ENCODE measurements at regions of chr6 and their contacts with region 1.

Region 1: GRCh38 chr6:42879372-42880239 is at the start of gene RPL7L1:
- DNase-seq: peak; percentile 86
- H3K4me3 Mint-ChIP-seq: peak within 1 kb of the TSS; percentile 94
- H3K27ac Mint-ChIP-seq: peak within 1 kb of the TSS; percentile 92
- H3K4me1 Mint-ChIP-seq: peaks cover 31% of the 10 kb centered on the region
- H3K27me3 Mint-ChIP-seq: no peaks in the 10 kb centered on the region
- total RNA-seq, gene RPL7L1: 71.4 to 74.2 TPM

Region 2: GRCh38 chr6:42661540-42662153 is 218.0 kb before region 1 on chr6:
- CTCF ChIA-PET with region 1: interaction called, 15 read pairs
- POLR2A ChIA-PET with region 1: interaction called, 6 read pairs
- DNase-seq: peak; percentile 86
- H3K4me3 Mint-ChIP-seq: no peak overlapping the region
- H3K27ac Mint-ChIP-seq: no peak overlapping the region
- H3K4me1 Mint-ChIP-seq: peaks cover 1% of the 10 kb centered on the region
- H3K27me3 Mint-ChIP-seq: no peaks in the 10 kb centered on the region

Region 3: DNA sequence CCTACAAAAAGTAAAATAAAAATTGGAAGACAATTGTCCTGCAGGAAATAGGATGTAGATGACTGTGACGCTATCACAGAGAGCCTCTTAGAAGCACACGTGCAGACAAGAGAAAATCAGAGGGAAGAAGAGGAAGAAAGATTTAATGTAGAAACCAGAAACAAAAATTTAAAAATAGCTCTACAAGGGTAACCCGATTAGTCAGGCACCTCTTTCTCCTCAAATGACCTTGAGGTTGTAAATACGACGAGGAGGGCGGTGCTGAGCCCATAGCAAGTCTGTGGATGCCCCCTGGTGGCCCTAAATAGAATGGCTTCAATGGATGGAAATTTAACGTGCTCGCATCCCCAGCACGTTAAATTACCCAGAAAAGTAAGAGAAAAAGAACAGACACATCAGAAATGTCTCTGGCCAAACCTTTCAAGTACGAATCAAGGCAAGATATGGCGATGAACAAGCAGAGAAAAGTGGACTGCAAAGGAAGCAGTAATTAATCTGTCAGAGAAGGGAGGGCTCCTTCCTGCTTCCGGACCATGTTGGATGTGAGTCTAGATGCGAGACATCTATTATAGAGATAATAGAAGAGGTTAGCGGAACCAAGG is 153.0 kb before region 1 on chr6:
- CTCF ChIA-PET with region 1: interaction called, 21 read pairs
- POLR2A ChIA-PET with region 1: interaction called, 25 read pairs
- DNase-seq: peak; percentile 79
- H3K4me3 Mint-ChIP-seq: peak overlapping the region; percentile 77
- H3K27ac Mint-ChIP-seq: peak overlapping the region; percentile 91
- H3K4me1 Mint-ChIP-seq: peaks cover 22% of the 10 kb centered on the region
- H3K27me3 Mint-ChIP-seq: no peaks in the 10 kb centered on the region

Region 4: GRCh38 chr6:42782622-42783176 is 96.9 kb before region 1 on chr6:
- CTCF ChIA-PET with region 1: interaction called, 4 read pairs
- POLR2A ChIA-PET with region 1: interaction called, 48 read pairs
- DNase-seq: peak; percentile 64
- H3K4me3 Mint-ChIP-seq: peak overlapping the region; percentile 95
- H3K27ac Mint-ChIP-seq: peak overlapping the region; percentile 100
- H3K4me1 Mint-ChIP-seq: peaks cover 18% of the 10 kb centered on the region
- H3K27me3 Mint-ChIP-seq: no peaks in the 10 kb centered on the region

Region 5: DNA sequence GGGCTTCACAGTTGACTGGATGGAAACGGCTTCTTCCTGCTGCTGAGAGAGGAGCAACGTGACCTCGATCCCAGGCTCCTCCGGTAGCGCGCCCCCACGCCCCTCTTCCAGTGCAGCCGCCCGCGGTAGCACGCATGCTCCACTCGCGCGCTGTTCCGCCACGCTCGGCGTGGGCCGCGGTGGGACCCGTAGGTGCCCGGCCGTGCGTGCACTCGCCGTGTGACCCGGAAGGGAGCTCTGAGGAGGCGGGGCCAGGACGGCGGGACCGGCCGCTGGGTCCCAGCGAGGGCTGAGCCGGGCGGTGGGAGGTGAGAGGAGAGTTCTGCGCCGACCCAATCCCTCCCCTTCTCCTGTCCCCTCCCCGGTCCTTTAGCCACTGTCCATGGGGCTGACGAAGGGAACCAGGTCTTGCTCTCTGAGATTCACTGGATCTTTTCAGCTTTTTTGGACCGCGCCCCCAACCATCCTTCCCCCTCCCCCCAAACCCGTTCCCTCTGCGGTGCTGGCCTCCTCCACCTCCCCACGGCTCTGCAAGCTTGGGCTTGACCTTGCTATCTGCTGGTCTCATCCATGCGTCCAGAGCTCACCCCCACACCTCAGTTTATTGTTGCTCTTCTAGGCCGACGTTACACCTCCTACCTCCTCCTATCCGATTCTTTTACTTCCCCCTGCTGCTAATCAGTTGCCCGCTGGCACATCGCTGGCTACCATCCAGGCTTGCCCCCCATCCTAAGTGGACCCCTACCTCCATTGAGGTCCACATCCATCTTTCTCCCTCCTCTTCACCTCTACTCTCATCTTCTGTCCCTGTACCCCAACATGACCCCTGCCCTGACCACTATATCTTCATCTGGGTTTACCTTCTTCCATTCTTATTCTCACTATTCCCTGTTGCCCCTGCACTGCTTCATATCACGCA is 302.6 kb after region 1 on chr6 and contains the start of gene CUL9:
- CTCF ChIA-PET with region 1: no interaction called
- POLR2A ChIA-PET with region 1: no interaction called
- DNase-seq: peak; percentile 87
- H3K4me3 Mint-ChIP-seq: peak within 1 kb of the TSS; percentile 95
- H3K27ac Mint-ChIP-seq: peak within 1 kb of the TSS; percentile 53
- H3K4me1 Mint-ChIP-seq: peaks cover 46% of the 10 kb centered on the region
- H3K27me3 Mint-ChIP-seq: no peaks in the 10 kb centered on the region
- total RNA-seq, gene CUL9: 45.0 to 45.9 TPM

Region 6: DNA sequence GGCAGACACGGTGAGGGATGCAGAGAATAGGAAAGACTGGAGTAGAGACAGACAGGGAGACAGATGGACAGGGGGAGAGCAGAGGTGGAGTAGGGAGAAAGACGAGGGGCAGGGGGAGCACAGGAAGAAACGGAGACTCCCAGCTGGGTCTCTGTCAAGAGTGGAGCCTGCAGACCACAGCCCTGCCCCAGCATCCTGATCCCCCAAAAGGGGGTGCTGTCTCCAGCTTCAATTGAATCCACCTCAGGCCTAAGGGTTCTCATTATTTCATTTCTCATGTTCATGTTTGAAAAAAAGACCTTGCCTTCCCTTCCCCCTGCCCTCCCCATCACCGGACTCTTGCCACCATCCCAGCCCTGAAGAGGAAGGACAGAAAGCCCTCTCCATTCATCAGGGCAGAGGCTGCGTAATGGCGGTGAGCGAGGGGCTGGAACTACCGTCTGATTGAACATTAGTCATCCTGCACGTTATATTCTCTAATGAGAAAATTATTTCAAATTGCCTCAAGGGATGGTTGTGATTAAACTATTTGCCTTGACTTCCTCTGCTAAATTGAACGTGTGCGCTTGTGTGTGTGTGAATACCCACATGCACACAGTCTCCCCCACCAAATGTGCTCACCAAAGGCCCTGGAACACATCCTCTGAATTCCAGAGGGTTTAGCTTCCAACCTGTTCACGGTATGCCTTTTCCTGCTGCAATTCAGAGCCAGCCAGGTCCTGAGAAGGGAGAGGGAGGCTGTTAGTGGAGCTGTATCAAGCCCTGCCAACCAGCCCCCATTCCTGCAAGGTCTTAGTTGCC is 1606.2 kb after region 1 on chr6:
- CTCF ChIA-PET with region 1: no interaction called
- POLR2A ChIA-PET with region 1: no interaction called
- DNase-seq: no peak
- H3K4me3 Mint-ChIP-seq: no peak overlapping the region
- H3K27ac Mint-ChIP-seq: no peak overlapping the region
- H3K4me1 Mint-ChIP-seq: no peaks in the 10 kb centered on the region
- H3K27me3 Mint-ChIP-seq: peaks cover 11% of the 10 kb centered on the region

Measured in activated CD4-positive, alpha-beta memory T cell treated with anti-CD3 and anti-CD28 coated beads, Interleukin-2, amount 10 ng/mL, durations not matched to agents 7 days and 5 days (primary cell).